MCF 10A (cell line): ENCODE measurements at regions of chr11 and their contacts with region 1.

Region 1: GRCh38 chr11:8225589-8226036 is 38.1 kb downstream of the LMO1 start:
- DNase-seq: peak; percentile 63
- H3K4me3 Mint-ChIP-seq: no peak overlapping the region
- H3K27ac Mint-ChIP-seq: no peak overlapping the region
- H3K4me1 Mint-ChIP-seq: peaks cover 20% of the 10 kb centered on the region
- H3K27me3 Mint-ChIP-seq: no peaks in the 10 kb centered on the region
- CTCF ChIP-seq: peak; percentile 94

Region 2: DNA sequence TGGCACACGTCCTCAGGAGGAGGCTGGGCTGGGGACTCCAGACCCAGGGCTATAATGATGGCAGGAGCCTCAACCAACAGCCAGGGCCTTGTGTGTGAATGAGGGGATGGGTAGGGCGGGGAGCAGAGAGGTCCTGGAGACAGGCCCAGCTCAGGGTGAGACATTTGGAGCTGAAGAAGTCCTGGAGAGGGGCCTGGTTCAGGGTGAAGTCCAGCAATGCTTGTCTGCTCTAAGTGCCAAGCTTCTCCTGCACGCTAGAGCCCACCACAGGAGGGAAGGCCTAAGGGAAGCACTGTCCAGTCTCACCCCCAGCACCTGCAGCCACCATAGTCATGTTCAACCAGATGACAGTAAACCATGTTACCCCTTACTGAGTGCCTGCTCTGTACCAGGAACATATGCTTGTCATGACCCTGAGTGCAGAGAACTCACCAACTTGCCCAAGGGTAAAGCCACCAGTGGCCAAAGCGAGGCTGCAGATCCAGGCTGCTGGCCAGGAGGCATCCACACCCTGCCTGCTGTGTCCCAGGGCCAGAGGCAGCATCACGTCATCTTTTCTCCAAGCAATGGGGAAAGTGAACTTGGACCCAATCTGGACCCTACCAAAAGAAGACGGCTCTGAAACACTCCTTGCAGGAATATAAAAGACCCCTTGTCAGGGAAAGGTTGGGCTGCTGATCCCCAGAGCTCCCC is 14.1 kb after region 1 on chr11:
- CTCF ChIA-PET with region 1: interaction called, 4 read pairs
- POLR2A ChIA-PET with region 1: interaction called, 12 read pairs
- intact Hi-C with region 1: no loop called
- DNase-seq: no peak
- H3K4me3 Mint-ChIP-seq: no peak overlapping the region
- H3K27ac Mint-ChIP-seq: no peak overlapping the region
- H3K4me1 Mint-ChIP-seq: peaks cover 3% of the 10 kb centered on the region
- H3K27me3 Mint-ChIP-seq: peaks cover 18% of the 10 kb centered on the region
- CTCF ChIP-seq: no peak

Region 3: GRCh38 chr11:8258784-8259183 is 33.2 kb after region 1 on chr11:
- CTCF ChIA-PET with region 1: interaction called, 398 read pairs
- POLR2A ChIA-PET with region 1: interaction called, 7 read pairs
- intact Hi-C with region 1: loop called (anchors 1 kb)
- DNase-seq: peak; percentile 90
- H3K4me3 Mint-ChIP-seq: no peak overlapping the region
- H3K27ac Mint-ChIP-seq: no peak overlapping the region
- H3K4me1 Mint-ChIP-seq: peaks cover 18% of the 10 kb centered on the region
- H3K27me3 Mint-ChIP-seq: no peaks in the 10 kb centered on the region
- CTCF ChIP-seq: no peak

Region 4: GRCh38 chr11:8309862-8310261 is 84.2 kb after region 1 on chr11:
- CTCF ChIA-PET with region 1: no interaction called
- POLR2A ChIA-PET with region 1: no interaction called
- intact Hi-C with region 1: loop called (anchors 1 kb)
- DNase-seq: peak; percentile 24
- H3K4me3 Mint-ChIP-seq: no peak overlapping the region
- H3K27ac Mint-ChIP-seq: no peak overlapping the region
- H3K4me1 Mint-ChIP-seq: no peaks in the 10 kb centered on the region
- H3K27me3 Mint-ChIP-seq: no peaks in the 10 kb centered on the region
- CTCF ChIP-seq: peak; percentile 20

Region 5: DNA sequence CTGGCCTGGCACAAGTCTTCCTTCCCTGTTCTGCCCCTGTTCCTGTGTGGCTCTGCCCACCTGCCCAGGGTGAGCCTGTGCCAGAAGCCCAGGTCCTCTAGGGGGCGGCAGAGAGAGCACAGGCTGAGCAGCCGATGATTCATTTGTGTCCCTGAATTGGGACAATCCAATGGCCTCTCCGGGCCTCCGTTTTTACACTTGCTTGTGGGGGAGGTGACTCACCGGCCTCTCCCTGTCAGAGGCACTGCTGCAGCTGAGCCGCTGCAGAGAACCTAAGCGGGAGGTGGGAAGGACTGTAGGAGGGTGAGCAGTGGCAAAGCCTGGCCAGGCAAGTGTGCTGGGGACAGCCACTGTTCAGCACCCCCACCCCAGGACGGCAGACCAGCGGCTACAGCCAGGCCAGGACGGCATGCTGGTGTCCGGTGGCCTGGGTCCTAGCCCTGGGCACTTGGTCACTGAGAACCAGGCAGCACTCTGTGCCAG is 103.3 kb after region 1 on chr11:
- CTCF ChIA-PET with region 1: interaction called, 8 read pairs
- POLR2A ChIA-PET with region 1: no interaction called
- intact Hi-C with region 1: loop called (anchors 5 kb)
- DNase-seq: peak; percentile 96
- H3K4me3 Mint-ChIP-seq: peak overlapping the region; percentile 50
- H3K27ac Mint-ChIP-seq: no peak overlapping the region
- H3K4me1 Mint-ChIP-seq: peaks cover 16% of the 10 kb centered on the region
- H3K27me3 Mint-ChIP-seq: no peaks in the 10 kb centered on the region
- CTCF ChIP-seq: peak; percentile 78